ENCODE measurements at regions of chr16 and their contacts with region 1.

Region 1: GRCh38 chr16:68085259-68086071 is at the start of gene NFATC3:
- DNase-seq: no peak
- ATAC-seq: peak; percentile 93
- H3K4me3 ChIP-seq: peak within 1 kb of the TSS; percentile 70 to 86
- H3K27ac ChIP-seq: peak within 1 kb of the TSS; percentile 90
- H3K4me1 ChIP-seq: peaks cover 4% of the 10 kb centered on the region
- H3K27me3 ChIP-seq: no peaks in the 10 kb centered on the region
- CTCF ChIP-seq: no peak
- total RNA-seq, gene NFATC3: 24.8 TPM

Region 2: GRCh38 chr16:68097088-68097487 is 11.6 kb after region 1 on chr16:
- CTCF ChIA-PET with region 1: interaction called, 14 read pairs
- POLR2A ChIA-PET with region 1: no interaction called
- in situ Hi-C with region 1: no loop called
- intact Hi-C with region 1: no loop called
- DNase-seq: no peak
- ATAC-seq: no peak
- H3K4me3 ChIP-seq: no peak overlapping the region
- H3K27ac ChIP-seq: no peak overlapping the region
- H3K4me1 ChIP-seq: peaks cover 4% of the 10 kb centered on the region; the same call in 1 of the 2 replicates
- H3K27me3 ChIP-seq: no peaks in the 10 kb centered on the region
- CTCF ChIP-seq: no peak

Region 3: DNA sequence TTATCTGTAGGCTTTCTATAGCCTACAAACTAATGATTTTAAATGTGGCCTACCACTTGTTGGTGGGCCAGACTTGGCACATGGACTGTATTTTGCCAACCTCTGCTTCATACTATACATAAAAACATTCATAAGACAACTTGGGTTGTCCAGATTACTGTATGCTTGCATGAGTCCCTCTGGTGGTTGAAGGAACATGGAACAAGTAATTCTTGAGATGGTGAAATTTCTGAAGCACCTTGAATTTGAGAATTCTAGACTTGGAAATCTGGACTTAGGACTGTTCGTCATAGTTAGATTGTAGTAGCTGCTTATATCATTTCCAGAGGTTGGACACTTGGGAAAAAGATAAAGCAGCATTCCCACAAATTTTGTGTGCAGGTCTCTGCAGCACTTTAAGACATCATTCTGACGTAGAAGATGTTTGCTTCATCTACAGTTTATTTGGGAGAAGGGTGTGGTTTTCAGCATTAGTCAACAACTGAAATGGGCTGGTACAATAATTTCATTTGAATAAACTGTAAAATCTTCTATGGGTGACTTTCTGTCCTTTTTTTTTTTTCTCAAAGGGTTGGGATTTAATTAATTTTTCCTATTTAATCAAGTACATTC is 30.9 kb after region 1 on chr16:
- CTCF ChIA-PET with region 1: no interaction called
- POLR2A ChIA-PET with region 1: interaction called, 10 read pairs
- in situ Hi-C with region 1: no loop called
- intact Hi-C with region 1: no loop called
- DNase-seq: peak; percentile 5
- ATAC-seq: 0 out of 2 replicates have a peak, but pooled peaks have one; percentile 56
- H3K4me3 ChIP-seq: no peak overlapping the region
- H3K27ac ChIP-seq: no peak overlapping the region
- H3K4me1 ChIP-seq: no peaks in the 10 kb centered on the region
- H3K27me3 ChIP-seq: no peaks in the 10 kb centered on the region
- CTCF ChIP-seq: no peak; the same call in 1 of the 2 replicates

Region 4: DNA sequence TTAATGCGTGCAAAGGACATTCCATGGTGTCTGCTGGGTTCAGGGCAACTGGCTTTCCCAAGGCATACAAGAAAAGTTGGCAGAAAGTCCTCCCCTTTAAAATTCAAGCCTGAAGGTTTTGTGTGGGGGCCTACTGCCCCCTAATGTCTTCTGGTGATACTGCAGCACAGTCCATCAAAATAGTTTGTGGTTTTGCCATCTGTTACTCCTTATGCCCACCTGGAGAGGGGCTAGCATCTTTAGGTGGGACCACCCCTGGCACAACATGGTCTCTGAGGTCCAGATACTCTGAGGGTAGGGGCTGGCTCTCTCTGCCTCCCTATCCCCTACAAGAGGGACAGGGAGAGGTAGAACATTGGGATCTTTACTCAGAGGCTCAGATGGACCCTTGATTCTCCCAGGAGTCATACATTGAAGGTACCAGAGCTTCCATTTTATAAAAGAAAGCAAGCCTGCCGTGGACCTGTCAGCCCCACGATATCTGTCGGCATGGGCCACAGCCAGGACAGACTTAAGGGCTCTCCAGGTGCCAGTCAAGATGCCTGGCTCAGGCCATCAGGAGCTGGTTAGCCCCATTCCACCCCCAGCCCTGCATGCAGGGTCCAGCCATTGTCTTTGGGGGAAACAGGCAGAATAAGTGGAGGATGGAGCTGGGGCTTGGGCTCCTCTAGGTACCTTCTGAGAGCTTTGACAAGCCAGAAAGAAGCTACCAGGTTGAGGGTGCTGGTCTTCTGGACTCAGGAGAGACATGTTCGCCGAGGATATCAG is 144.2 kb after region 1 on chr16:
- CTCF ChIA-PET with region 1: interaction called, 4 read pairs
- POLR2A ChIA-PET with region 1: no interaction called
- in situ Hi-C with region 1: no loop called
- intact Hi-C with region 1: loop called (anchors 5 kb)
- DNase-seq: no peak
- ATAC-seq: peak; percentile 44; the same call in 1 of the 2 replicates
- H3K4me3 ChIP-seq: no peak overlapping the region
- H3K27ac ChIP-seq: no peak overlapping the region
- H3K4me1 ChIP-seq: peaks cover 18% of the 10 kb centered on the region
- H3K27me3 ChIP-seq: no peaks in the 10 kb centered on the region
- CTCF ChIP-seq: peak; percentile 87

Measured in Panc1 (cell line).